CD14-positive monocyte (primary cell): ENCODE measurements at regions of chr6 and their contacts with region 1.

Region 1: DNA sequence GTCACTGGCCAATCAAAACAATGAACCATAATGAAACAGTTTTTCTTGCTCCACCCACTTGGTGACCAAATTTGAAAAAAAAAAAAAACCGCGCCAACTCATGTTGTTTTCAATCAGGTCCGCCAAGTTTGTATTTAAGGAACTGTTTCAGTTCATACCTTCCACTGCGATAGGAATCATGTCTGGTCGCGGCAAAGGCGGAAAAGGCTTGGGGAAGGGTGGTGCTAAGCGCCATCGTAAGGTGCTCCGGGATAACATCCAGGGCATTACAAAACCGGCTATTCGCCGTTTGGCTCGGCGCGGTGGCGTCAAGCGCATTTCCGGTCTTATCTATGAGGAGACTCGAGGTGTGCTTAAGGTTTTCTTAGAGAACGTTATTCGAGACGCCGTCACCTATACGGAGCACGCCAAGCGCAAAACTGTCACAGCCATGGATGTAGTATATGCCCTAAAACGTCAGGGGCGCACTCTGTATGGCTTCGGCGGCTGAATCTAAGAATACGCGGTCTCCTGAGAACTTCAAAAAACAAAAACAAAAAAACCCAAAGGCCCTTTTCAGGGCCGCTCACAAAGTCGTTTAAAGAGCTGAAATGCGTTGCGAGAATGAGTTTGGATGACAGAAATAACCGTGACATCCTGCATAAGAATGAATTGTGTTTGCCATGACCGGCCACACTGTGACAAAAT is 16.7 kb downstream of the HFE start:
- DNase-seq: peak; percentile 85 to 88 (median 87)
- H3K4me3 ChIP-seq: peak overlapping the region; percentile 59 to 89 (median 84)
- H3K4me3 Mint-ChIP-seq: peak overlapping the region; percentile 86 to 87
- H3K27ac ChIP-seq: peak overlapping the region; percentile 80 to 88
- H3K27ac Mint-ChIP-seq: peak overlapping the region; percentile 88 to 96 (median 93)
- H3K4me1 ChIP-seq: peaks cover 13 to 19% of the 10 kb centered on the region in 2 donors
- H3K4me1 Mint-ChIP-seq: peaks cover 15% of the 10 kb centered on the region
- H3K27me3 ChIP-seq: no peaks in the 10 kb centered on the region
- H3K27me3 Mint-ChIP-seq: peaks cover 0 to 3% (median 2%) of the 10 kb centered on the region in 3 donors
- CTCF ChIP-seq: peak; percentile 67

Region 2: DNA sequence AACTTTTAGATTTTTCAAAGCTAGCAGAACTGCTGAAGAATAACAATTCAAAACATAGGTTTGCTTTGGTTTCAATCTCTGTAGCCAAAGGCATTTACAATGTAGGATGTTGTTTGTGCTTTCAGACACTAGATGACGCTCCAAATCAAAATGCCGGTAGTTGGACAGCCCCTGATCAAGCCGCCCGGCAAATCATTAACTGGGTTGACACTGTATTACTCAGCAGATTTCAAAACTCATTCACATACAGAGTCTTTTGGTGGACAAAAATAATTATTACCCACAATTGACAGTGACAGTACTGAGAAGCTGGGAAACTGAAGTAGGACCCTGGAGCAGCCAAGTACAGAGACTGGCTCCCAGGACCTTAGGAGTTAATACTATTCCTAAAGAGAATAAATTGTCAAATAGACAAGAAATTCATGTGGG is 37.9 kb before region 1 on chr6:
- intact Hi-C with region 1: loop called in 1 of 2 experiments (anchors 2 kb)
- DNase-seq: peak; percentile 70 to 82 (median 79)
- H3K4me3 ChIP-seq: peak overlapping the region in 1 of 3 experiments; percentile 15
- H3K4me3 Mint-ChIP-seq: peak overlapping the region in 1 of 2 donors; percentile 4
- H3K27ac ChIP-seq: no peak overlapping the region
- H3K27ac Mint-ChIP-seq: peak overlapping the region in 3 of 7 donors; percentile 12 to 70 (median 46)
- H3K4me1 ChIP-seq: peaks cover 10 to 13% of the 10 kb centered on the region in 2 donors
- H3K4me1 Mint-ChIP-seq: peaks cover 20% of the 10 kb centered on the region
- H3K27me3 ChIP-seq: no peaks in the 10 kb centered on the region
- H3K27me3 Mint-ChIP-seq: peaks cover 0 to 13% (median 6%) of the 10 kb centered on the region in 3 donors
- CTCF ChIP-seq: peak; percentile 90

Region 3: GRCh38 chr6:26116267-26116666 is 12.4 kb after region 1 on chr6:
- intact Hi-C with region 1: loop called in 1 of 2 experiments (anchors 1 kb)
- DNase-seq: no peak
- H3K4me3 ChIP-seq: no peak overlapping the region
- H3K4me3 Mint-ChIP-seq: no peak overlapping the region
- H3K27ac ChIP-seq: no peak overlapping the region
- H3K27ac Mint-ChIP-seq: no peak overlapping the region
- H3K4me1 ChIP-seq: no peaks in the 10 kb centered on the region
- H3K4me1 Mint-ChIP-seq: peaks cover 7% of the 10 kb centered on the region
- H3K27me3 ChIP-seq: no peaks in the 10 kb centered on the region
- H3K27me3 Mint-ChIP-seq: peaks cover 1 to 3% (median 2%) of the 10 kb centered on the region in 3 donors
- CTCF ChIP-seq: no peak

Region 4: DNA sequence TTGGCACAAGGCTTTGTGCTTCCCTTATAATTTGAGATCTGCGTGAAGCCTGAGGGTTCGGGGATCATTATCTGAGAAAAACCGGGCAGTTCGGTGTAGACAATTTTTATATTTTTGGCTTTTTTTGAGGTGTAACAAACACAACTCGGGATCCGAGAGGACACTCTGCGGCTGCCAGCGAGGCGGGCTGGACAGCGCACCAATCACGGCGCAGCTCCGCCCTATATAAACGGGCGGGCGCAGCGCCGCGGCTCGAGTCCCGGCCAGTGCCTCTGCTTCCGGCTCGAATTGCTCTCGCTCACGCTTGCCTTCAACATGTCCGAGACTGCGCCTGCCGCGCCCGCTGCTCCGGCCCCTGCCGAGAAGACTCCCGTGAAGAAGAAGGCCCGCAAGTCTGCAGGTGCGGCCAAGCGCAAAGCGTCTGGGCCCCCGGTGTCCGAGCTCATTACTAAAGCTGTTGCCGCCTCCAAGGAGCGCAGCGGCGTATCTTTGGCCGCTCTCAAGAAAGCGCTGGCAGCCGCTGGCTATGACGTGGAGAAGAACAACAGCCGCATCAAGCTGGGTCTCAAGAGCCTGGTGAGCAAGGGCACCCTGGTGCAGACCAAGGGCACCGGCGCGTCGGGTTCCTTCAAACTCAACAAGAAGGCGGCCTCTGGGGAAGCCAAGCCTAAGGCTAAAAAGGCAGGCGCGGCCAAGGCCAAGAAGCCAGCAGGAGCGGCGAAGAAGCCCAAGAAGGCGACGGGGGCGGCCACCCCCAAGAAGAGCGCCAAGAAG is 52.4 kb after region 1 on chr6:
- intact Hi-C with region 1: loop called (anchors 10 kb)
- DNase-seq: peak; percentile 82 to 89 (median 87)
- H3K4me3 ChIP-seq: peak overlapping the region; percentile 58 to 88 (median 70)
- H3K4me3 Mint-ChIP-seq: peak overlapping the region; percentile 92 to 93
- H3K27ac ChIP-seq: peak overlapping the region; percentile 87 to 88
- H3K27ac Mint-ChIP-seq: peak overlapping the region; percentile 92 to 100 (median 98)
- H3K4me1 ChIP-seq: peaks cover 38 to 40% of the 10 kb centered on the region in 2 donors
- H3K4me1 Mint-ChIP-seq: peaks cover 36% of the 10 kb centered on the region
- H3K27me3 ChIP-seq: no peaks in the 10 kb centered on the region
- H3K27me3 Mint-ChIP-seq: no peaks in the 10 kb centered on the region
- CTCF ChIP-seq: no peak